ENCODE measurements at regions of chr2 and their contacts with region 1.

Region 1: DNA sequence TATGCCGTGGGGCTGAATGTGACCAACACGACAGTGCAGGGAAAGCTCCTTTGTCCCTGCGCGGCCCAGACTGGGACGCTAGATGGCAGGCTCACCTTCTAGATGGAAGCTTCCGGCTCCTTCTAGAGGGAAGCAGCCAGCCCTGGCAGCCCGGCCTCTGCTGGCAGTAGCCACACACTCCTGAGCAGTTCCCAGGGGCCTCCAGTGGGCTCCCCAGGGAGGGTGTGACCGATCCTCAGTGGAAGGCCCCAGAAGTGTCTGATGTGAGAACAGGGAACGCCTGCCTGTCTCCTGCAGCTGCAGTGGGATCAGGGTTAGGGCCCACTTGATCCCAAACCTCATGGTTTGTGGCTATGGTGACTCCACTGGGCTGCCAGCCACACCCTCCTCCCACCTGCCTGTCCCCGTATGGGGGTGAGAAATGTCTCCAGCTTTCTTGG is 48.5 kb upstream of the LRPPRC start:
- DNase-seq: peak; percentile 92
- ATAC-seq: peak; percentile 100
- H3K4me3 Mint-ChIP-seq: no peak overlapping the region
- H3K27ac Mint-ChIP-seq: no peak overlapping the region
- H3K4me1 Mint-ChIP-seq: peaks cover 2% of the 10 kb centered on the region
- H3K27me3 Mint-ChIP-seq: no peaks in the 10 kb centered on the region

Region 2: GRCh38 chr2:44061876-44062275 is 17.6 kb after region 1 on chr2:
- CTCF ChIA-PET with region 1: interaction called, 12 read pairs
- DNase-seq: no peak
- ATAC-seq: no peak
- H3K4me3 Mint-ChIP-seq: no peak overlapping the region
- H3K27ac Mint-ChIP-seq: no peak overlapping the region
- H3K4me1 Mint-ChIP-seq: no peaks in the 10 kb centered on the region
- H3K27me3 Mint-ChIP-seq: no peaks in the 10 kb centered on the region

Region 3: DNA sequence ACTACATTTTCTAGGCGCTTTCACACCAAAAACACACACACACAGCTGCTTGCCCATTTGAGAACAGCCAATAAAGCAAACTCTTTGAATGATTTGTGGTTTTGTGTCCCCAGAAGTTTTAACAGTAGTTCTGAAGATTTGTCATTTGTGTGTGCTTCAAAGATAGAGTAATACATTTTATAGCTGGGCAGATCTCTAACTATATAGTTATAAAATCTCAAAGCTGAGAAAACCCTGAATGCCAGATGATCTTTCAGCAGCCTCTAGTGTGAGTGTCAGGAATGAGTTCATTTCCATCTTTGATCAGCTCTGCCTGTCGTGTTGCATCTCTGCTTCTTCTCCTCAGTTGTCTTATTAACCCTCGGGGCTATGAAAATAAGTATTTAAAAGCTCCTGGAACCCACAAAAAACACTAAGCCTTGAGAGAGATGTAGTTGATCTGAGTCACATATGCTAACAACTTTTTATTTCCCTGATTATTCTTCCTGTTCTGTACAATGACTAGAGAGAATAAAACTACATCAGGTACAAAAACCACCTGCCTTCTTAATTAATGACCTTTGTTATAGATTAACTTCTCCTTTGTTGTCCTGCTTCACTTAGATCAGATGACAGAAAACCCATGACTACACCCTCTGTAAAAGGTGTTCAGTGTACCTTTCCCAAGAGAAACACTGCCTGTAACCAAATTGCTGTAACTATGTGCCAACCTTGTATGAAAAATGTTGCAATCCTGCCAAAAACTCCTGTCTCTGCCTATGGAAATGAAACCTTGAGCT is 201.0 kb after region 1 on chr2:
- CTCF ChIA-PET with region 1: interaction called, 10 read pairs
- DNase-seq: no peak
- ATAC-seq: no peak
- H3K4me3 Mint-ChIP-seq: no peak overlapping the region
- H3K27ac Mint-ChIP-seq: no peak overlapping the region
- H3K4me1 Mint-ChIP-seq: peaks cover 10% of the 10 kb centered on the region
- H3K27me3 Mint-ChIP-seq: no peaks in the 10 kb centered on the region

Region 4: GRCh38 chr2:44342854-44343253 is 298.6 kb after region 1 on chr2:
- CTCF ChIA-PET with region 1: interaction called, 10 read pairs
- DNase-seq: peak; percentile 45
- ATAC-seq: peak; percentile 47
- H3K4me3 Mint-ChIP-seq: no peak overlapping the region
- H3K27ac Mint-ChIP-seq: no peak overlapping the region
- H3K4me1 Mint-ChIP-seq: no peaks in the 10 kb centered on the region
- H3K27me3 Mint-ChIP-seq: no peaks in the 10 kb centered on the region

Region 5: GRCh38 chr2:44955593-44956392 is 911.5 kb after region 1 on chr2:
- CTCF ChIA-PET with region 1: interaction called, 11 read pairs
- DNase-seq: peak; percentile 83
- ATAC-seq: peak; percentile 75
- H3K4me3 Mint-ChIP-seq: no peak overlapping the region
- H3K27ac Mint-ChIP-seq: no peak overlapping the region
- H3K4me1 Mint-ChIP-seq: peaks cover 14% of the 10 kb centered on the region
- H3K27me3 Mint-ChIP-seq: peaks cover 73% of the 10 kb centered on the region

Measured in activated CD8-positive, alpha-beta memory T cell treated with anti-CD3 and anti-CD28 coated beads, Interleukin-2, amount 10 ng/mL, durations not matched to agents 7 days and 5 days (primary cell).